Calu3 (cell line): ENCODE measurements at regions of chr11 and their contacts with region 1.

Region 1: DNA sequence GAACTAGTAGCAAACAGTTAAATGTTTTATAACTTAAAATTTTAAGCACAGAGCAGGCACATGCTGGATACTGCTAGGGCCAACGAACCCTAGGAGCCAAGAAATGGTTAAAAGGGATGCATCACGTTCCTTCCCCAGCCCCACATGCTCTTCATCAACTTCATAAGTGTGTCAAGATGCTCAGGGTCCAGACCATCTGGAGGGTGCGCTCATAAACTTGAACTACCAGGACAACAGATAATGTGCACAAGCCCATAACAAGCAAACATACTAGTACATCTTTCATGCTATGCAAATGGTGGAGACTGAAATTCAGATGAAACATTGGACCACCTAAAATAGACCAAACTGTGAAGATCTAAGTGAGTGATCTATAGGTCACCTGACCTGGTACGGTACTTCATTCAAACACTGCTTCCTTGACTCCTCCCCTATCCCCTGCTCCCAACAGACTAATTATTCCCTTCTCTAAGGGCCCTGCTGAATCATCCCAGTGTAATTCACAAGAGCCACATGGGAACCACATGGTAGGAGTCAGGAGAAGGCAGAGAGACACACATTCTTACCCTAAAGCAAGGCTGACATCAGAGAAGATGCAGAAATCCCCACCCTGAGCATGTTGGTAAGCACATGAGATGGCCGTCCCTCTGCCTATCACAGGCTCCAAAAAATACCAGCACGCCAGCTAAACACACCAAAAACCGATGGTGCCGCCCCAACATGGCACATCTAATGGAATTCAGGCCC is 83.9 kb downstream of the ETS1 start:
- DNase-seq: no peak
- H3K4me3 Mint-ChIP-seq: no peak overlapping the region
- H3K27ac Mint-ChIP-seq: no peak overlapping the region
- H3K4me1 Mint-ChIP-seq: peaks cover 87% of the 10 kb centered on the region
- H3K27me3 Mint-ChIP-seq: no peaks in the 10 kb centered on the region
- CTCF ChIP-seq: no peak

Region 2: DNA sequence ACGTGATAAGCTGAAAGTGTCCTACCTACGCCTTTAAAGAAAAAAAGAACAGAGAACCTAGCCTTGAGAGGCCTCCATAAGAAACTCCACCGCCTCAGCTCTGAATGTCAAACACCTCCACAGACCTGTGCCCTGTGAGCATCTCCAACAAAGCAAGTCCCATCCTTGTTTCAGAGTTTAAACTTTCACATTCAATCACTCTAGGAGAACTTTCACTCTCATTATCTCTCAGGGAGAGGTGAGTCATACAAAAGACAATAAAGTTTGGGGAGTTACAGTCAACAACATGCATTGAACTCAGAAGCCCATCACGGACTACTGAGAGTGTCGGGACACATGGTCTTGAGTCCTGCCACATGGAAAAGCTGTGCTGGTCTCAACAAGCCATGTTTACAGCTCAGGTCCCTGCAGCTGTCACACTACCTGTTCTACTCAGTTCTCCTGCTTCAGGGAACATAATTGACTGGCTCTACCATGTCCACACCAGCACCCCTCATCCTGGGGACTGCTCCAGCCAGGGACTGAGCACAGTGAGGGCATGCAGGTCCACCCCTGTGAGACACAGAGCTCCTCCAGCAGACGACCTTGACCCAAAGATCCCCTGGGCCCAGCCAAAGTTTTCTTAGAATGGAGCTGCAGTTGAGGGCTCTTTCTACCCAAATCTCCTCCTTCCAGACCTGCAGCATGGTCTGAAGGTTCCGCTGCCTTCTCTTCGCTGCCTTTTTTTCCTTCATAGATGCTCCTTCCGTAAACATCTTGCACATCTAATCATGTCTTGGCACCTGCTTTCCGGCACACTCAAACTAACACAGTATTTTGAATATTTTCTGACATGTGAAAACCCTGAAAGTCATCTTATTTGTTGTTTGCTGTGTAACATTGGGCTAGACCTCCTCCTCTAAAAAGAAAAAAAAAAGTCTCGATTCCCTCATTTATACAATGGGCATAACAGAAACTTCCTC is 31.0 kb before region 1 on chr11:
- CTCF ChIA-PET with region 1: no interaction called
- intact Hi-C with region 1: loop called (anchors 5 kb)
- DNase-seq: no peak
- H3K4me3 Mint-ChIP-seq: no peak overlapping the region
- H3K27ac Mint-ChIP-seq: no peak overlapping the region
- H3K4me1 Mint-ChIP-seq: peaks cover 59% of the 10 kb centered on the region
- H3K27me3 Mint-ChIP-seq: no peaks in the 10 kb centered on the region
- CTCF ChIP-seq: no peak

Region 3: DNA sequence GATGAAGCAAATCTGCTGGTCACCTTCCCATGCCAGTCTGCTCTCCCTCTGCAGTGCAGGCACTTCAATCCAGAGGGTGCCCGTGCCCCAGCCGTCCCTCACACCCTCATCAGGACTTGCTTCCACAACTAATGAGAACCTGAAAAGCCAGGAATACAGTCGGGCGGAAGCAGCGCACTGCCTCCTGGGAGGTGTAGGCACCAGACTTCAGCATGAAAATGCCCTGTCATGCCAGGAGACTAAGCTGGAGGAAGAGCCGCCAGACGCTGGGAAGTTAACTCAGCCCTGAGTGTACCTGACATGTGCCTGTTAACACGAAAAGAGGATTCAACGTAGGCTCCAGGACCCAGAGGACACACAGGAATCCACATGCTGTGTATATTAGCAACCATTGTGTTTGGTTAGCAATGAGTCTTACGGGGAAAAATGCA is 150.4 kb after region 1 on chr11:
- CTCF ChIA-PET with region 1: no interaction called
- intact Hi-C with region 1: no loop called
- DNase-seq: peak; percentile 25
- H3K4me3 Mint-ChIP-seq: peak overlapping the region; percentile 11
- H3K27ac Mint-ChIP-seq: peak overlapping the region; percentile 84
- H3K4me1 Mint-ChIP-seq: peaks cover 11% of the 10 kb centered on the region
- H3K27me3 Mint-ChIP-seq: no peaks in the 10 kb centered on the region
- CTCF ChIP-seq: no peak